ENCODE measurements at regions of chr11 and their contacts with region 1.

Region 1: DNA sequence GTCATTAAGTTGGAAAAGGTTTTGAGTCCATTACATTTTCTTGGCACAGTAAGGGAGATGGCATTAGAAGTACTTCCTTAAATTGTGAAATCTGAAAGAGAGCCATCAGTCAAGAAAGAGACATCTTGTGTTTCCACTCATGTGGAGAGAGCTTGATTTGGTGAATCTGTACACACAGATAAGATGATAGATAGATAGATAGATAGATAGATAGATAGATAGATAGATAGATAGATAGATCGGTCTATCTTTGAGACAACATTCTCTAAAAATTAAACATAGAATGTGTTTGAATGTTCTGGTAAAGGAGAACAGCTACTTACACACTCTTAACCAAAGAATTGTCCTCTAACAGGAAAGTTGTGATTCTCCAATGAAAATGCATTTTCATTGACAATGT is 76.2 kb downstream of the TTC17 start:
- DNase-seq: no peak
- H3K4me3 ChIP-seq: no peak overlapping the region
- H3K27ac ChIP-seq: no peak overlapping the region
- H3K4me1 ChIP-seq: no peaks in the 10 kb centered on the region
- H3K27me3 ChIP-seq: no peaks in the 10 kb centered on the region
- CTCF ChIP-seq: no peak
- EP300 ChIP-seq: no peak
- POLR2A ChIP-seq: no peak

Region 2: GRCh38 chr11:42709216-42709615 is 725.7 kb before region 1 on chr11:
- in situ Hi-C with region 1: no loop called
- intact Hi-C with region 1: loop called (anchors 5 kb)
- DNase-seq: no peak
- H3K4me3 ChIP-seq: no peak overlapping the region
- H3K27ac ChIP-seq: no peak overlapping the region
- H3K4me1 ChIP-seq: no peaks in the 10 kb centered on the region
- H3K27me3 ChIP-seq: no peaks in the 10 kb centered on the region
- CTCF ChIP-seq: no peak
- EP300 ChIP-seq: no peak
- POLR2A ChIP-seq: no peak

Region 3: GRCh38 chr11:43497144-43497543 is 62.3 kb after region 1 on chr11:
- in situ Hi-C with region 1: loop called in 1 of 4 experiments (anchors 10 kb)
- intact Hi-C with region 1: no loop called
- DNase-seq: no peak
- H3K4me3 ChIP-seq: no peak overlapping the region
- H3K27ac ChIP-seq: no peak overlapping the region
- H3K4me1 ChIP-seq: no peaks in the 10 kb centered on the region
- H3K27me3 ChIP-seq: no peaks in the 10 kb centered on the region
- CTCF ChIP-seq: no peak
- EP300 ChIP-seq: no peak
- POLR2A ChIP-seq: no peak

Region 4: GRCh38 chr11:45289369-45289768 is 1854.5 kb after region 1 on chr11:
- in situ Hi-C with region 1: no loop called
- intact Hi-C with region 1: no loop called
- DNase-seq: no peak
- H3K4me3 ChIP-seq: no peak overlapping the region
- H3K27ac ChIP-seq: no peak overlapping the region
- H3K4me1 ChIP-seq: peaks cover 0 to 9% (median 2%) of the 10 kb centered on the region in 4 donors
- H3K27me3 ChIP-seq: peaks cover 35% of the 10 kb centered on the region
- CTCF ChIP-seq: no peak
- EP300 ChIP-seq: no peak
- POLR2A ChIP-seq: no peak